KBM-7 (cell line): ENCODE measurements at regions of chr16 and their contacts with region 1.

Region 1: GRCh38 chr16:49348408-49349177 is 25.0 kb upstream of the C16orf78 start:
- DNase-seq: peak; percentile 9

Region 2: DNA sequence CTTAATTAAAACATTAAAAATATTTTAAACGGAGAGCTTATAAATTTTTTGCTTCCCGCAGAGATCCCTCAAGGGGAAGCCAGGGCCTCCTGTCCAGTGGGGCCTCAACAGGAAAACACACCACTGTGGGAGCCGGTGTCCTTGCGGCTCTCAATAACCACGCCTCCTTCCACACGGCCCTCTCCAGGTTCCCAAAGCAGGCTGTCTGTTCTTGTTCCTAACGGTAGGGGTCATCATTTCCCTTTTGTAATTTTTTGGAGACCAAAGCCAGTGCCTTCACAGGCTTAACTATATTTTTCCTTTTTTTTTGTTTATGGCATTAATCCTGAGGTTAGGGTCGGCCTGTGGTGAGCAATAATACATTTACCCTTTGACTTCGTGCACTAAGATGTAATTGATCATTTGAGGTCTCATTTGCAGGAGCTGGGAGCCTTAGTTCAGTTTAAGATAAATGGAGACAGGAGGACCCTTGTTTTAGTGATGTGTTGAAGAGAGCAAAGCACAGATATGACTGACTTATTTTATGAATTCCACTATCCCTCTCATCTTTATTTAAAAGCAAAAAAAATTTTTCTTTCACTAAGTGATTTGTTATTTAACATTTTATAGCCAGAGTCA is 661.1 kb before region 1 on chr16:
- in situ Hi-C with region 1: loop called (anchors 25 kb)
- DNase-seq: peak; percentile 80